PC-9 (cell line): ENCODE measurements at regions of chr22 and their contacts with region 1.

Region 1: DNA sequence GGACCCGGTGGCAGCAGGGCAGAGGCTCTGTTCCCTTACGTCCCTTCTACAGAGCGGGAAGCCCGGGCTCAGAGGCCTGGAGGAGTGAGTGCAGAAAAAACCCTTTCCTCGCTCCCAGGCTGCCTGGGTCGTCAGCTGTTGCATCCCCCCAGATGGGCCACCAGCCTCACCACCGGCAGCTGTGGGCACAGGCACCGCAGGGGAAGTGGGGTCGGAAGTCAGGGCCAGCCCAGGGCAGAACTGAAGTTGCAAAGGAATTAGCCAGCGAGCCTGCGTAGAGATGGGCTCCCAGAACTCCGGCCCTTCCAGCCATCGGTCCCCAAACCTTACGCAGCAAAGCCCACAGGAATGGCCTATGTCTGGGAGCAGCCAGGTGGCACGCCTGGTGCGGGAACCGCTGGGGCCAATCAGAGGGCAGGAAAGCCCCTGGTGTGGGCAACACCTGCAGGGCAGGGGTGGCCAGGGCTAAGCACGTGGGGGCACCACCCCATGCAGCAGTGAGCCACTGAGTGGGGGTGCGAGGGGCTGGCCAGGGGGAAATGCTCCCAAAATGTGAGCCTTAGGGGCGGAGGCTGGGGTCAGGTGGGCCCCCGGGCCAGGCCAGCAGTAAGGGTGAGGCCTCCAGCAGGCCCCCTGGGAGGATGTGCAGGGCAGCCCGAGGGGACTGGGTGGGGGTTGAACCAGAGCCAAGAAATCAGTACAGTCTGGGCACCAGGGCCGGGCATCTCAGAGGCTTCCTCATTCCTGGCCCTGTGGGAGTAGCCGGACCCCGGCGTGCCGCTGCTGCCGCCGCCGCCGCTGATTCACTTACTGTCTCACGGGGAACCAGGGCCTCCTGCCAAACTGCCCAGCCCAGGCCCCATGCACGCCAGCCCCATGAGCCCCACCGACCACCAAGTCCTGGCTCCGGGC is 58.2 kb downstream of the WNT7B start:
- DNase-seq: peak; percentile 92 to 97
- H3K4me3 ChIP-seq: peak overlapping the region; percentile 37; the same call in 1 of the 2 replicates
- H3K27ac ChIP-seq: peak overlapping the region; percentile 85
- H3K4me1 ChIP-seq: peaks cover 70% of the 10 kb centered on the region
- H3K27me3 ChIP-seq: no peaks in the 10 kb centered on the region
- CTCF ChIP-seq: no peak

Region 2: GRCh38 chr22:45645526-45646414 is 272.9 kb before region 1 on chr22:
- CTCF ChIA-PET with region 1: interaction called, 8 read pairs
- POLR2A ChIA-PET with region 1: no interaction called
- intact Hi-C with region 1: loop called (anchors 2 kb)
- DNase-seq: peak; percentile 37 to 85
- H3K4me3 ChIP-seq: no peak overlapping the region
- H3K27ac ChIP-seq: no peak overlapping the region
- H3K4me1 ChIP-seq: peaks cover 33% of the 10 kb centered on the region
- H3K27me3 ChIP-seq: no peaks in the 10 kb centered on the region
- CTCF ChIP-seq: peak; percentile 88

Region 3: GRCh38 chr22:45775569-45776312 is 143.0 kb before region 1 on chr22:
- CTCF ChIA-PET with region 1: no interaction called
- POLR2A ChIA-PET with region 1: no interaction called
- intact Hi-C with region 1: loop called (anchors 5 kb)
- DNase-seq: no peak
- H3K4me3 ChIP-seq: no peak overlapping the region
- H3K27ac ChIP-seq: peak overlapping the region; percentile 82
- H3K4me1 ChIP-seq: peaks cover 45% of the 10 kb centered on the region
- H3K27me3 ChIP-seq: no peaks in the 10 kb centered on the region
- CTCF ChIP-seq: no peak

Region 4: GRCh38 chr22:45887202-45888131 is 31.2 kb before region 1 on chr22:
- CTCF ChIA-PET with region 1: no interaction called
- POLR2A ChIA-PET with region 1: no interaction called
- intact Hi-C with region 1: loop called (anchors 1 kb)
- DNase-seq: peak; percentile 90 to 96
- H3K4me3 ChIP-seq: no peak overlapping the region
- H3K27ac ChIP-seq: no peak overlapping the region
- H3K4me1 ChIP-seq: peaks cover 15% of the 10 kb centered on the region
- H3K27me3 ChIP-seq: no peaks in the 10 kb centered on the region
- CTCF ChIP-seq: no peak

Region 5: GRCh38 chr22:45960477-45961386 is 42.0 kb after region 1 on chr22:
- CTCF ChIA-PET with region 1: interaction called, 3 read pairs
- POLR2A ChIA-PET with region 1: interaction called, 3 read pairs
- intact Hi-C with region 1: loop called (anchors 1 kb)
- DNase-seq: peak; percentile 40 to 68
- H3K4me3 ChIP-seq: no peak overlapping the region
- H3K27ac ChIP-seq: no peak overlapping the region
- H3K4me1 ChIP-seq: peaks cover 26% of the 10 kb centered on the region; the same call in 1 of the 2 replicates
- H3K27me3 ChIP-seq: no peaks in the 10 kb centered on the region
- CTCF ChIP-seq: no peak

Region 6: DNA sequence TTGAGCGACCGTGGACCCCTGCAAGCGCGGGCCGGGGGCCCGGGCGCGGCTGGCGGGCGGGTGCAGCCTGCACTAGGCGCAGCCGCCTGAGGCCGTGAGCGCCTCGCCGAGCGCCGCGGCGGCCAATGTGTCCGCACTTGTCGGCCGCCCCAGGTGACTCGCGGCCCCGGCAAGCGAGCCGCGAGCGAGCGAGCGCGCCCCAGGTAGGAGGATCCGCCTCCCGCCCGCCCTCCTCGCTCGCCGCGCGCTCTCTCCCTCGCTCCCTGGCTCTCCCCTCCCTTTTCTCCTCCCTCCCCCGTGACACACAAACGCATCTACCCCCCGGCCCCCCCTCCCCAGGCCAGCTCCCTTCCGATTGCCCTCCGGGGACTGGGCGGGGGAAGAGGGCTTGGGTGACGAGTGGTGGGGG is 58.3 kb after region 1 on chr22 and contains the start of gene WNT7B:
- CTCF ChIA-PET with region 1: interaction called, 4 read pairs
- POLR2A ChIA-PET with region 1: interaction called, 6 read pairs
- intact Hi-C with region 1: loop called (anchors 1 kb)
- DNase-seq: peak; percentile 79 to 86
- H3K4me3 ChIP-seq: peak within 1 kb of the TSS; percentile 99
- H3K27ac ChIP-seq: no peak within 1 kb of the TSS
- H3K4me1 ChIP-seq: peaks cover 36% of the 10 kb centered on the region
- H3K27me3 ChIP-seq: no peaks in the 10 kb centered on the region
- CTCF ChIP-seq: no peak
- total RNA-seq, gene WNT7B: 66.9 and 75.5 TPM in 2 replicates